ENCODE measurements at regions of chr10 and their contacts with region 1.

Region 1: GRCh38 chr10:110706690-110707098 is 62.6 kb downstream of the RBM20 start:
- DNase-seq: no peak
- H3K4me3 Mint-ChIP-seq: no peak overlapping the region
- H3K27ac Mint-ChIP-seq: no peak overlapping the region
- H3K4me1 Mint-ChIP-seq: no peaks in the 10 kb centered on the region
- H3K27me3 Mint-ChIP-seq: peaks cover 10% of the 10 kb centered on the region

Region 2: GRCh38 chr10:110613996-110614495 is 92.6 kb before region 1 on chr10:
- CTCF ChIA-PET with region 1: no interaction called
- POLR2A ChIA-PET with region 1: no interaction called
- DNase-seq: no peak
- H3K4me3 Mint-ChIP-seq: no peak overlapping the region
- H3K27ac Mint-ChIP-seq: no peak overlapping the region
- H3K4me1 Mint-ChIP-seq: peaks cover 43% of the 10 kb centered on the region
- H3K27me3 Mint-ChIP-seq: no peaks in the 10 kb centered on the region

Region 3: DNA sequence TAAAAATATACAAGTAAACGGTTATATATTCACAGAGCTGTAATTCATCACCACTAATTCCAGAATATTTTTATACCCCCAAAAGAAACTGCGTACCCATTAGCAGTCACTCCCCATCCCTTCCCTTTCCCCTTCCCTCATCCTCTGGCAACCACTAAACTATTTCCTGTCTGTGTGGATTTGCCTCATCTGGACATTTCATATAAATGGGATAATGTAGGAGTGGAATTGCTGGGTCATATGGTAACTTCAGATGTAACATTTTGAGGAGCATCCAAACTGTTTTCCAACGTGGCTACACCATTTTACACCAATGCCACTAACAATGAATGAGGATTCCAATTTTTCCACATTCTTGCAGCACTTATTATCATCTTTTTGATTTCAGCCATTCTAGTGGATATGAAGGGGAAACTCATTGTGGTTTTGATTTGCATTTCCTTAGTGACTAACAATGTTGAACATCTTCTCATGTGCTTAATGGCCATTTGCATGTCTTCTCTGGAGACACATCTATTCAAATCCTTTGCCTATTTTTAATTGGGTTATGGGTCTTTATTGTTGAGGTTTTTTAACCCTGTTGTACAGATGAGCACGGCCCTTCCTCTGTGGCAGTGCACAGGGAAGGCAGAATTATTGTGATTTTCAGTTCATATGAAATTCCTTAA is 16.7 kb after region 1 on chr10:
- CTCF ChIA-PET with region 1: no interaction called
- POLR2A ChIA-PET with region 1: interaction called, 10 read pairs
- DNase-seq: no peak
- H3K4me3 Mint-ChIP-seq: no peak overlapping the region
- H3K27ac Mint-ChIP-seq: no peak overlapping the region
- H3K4me1 Mint-ChIP-seq: peaks cover 29% of the 10 kb centered on the region
- H3K27me3 Mint-ChIP-seq: no peaks in the 10 kb centered on the region

Measured in activated CD4-positive, alpha-beta T cell treated with anti-CD3 and anti-CD28 coated beads, Interleukin-2, amount 10 ng/mL, durations not matched to agents 7 days and 5 days (primary cell).